ENCODE measurements at regions of chr16 and their contacts with region 1.

Region 1: GRCh38 chr16:81204798-81205680 is 33.5 kb upstream of the BCO1 start:
- DNase-seq: no peak
- ATAC-seq: peak; percentile 71

Region 2: GRCh38 chr16:81127051-81127450 is 78.0 kb before region 1 on chr16:
- intact Hi-C with region 1: no loop called
- DNase-seq: no peak
- ATAC-seq: no peak

Region 3: DNA sequence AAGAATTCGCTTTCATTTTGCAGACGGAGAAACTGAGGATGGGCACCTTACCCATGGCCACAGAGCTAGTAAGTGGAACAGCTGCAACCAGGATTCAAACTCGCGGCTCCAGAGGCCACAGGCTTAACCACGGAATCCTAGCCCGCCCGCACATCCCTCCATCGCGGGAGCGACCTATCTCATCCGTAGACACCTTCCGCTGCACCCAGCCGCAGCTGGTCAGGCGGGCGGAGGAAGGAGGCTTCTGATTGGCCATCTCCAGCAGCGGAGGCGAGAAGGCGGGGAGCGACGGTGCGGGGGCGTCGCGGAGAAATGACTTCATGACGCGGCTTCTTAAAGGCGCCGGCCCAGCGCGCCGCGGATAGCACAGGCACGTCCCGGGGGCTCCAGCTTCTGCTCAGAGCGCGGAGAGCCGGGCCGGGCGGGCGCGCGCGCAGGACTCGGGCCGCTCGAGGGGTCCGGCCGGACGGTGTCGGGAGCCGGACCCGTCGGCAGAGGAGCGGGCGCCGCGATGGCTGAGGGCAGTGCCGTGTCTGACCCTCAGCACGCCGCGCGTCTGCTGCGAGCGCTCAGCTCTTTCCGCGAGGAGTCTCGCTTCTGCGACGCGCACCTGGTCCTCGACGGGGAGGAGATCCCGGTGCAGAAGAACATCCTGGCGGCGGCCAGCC is 109.7 kb after region 1 on chr16 and contains the start of gene GAN:
- intact Hi-C with region 1: loop called (anchors 10 kb)
- DNase-seq: peak; percentile 97
- ATAC-seq: peak; percentile 98
- total RNA-seq, gene GAN: 9.0 TPM

Measured in Right ventricle myocardium superior (tissue), 1 donor.